Activated CD4-positive, alpha-beta memory T cell treated with anti-CD3 and anti-CD28 coated beads, Interleukin-2, amount 10 ng/mL, durations not matched to agents 7 days and 5 days (primary cell): ENCODE measurements at regions of chr12 and their contacts with region 1.

Region 1: GRCh38 chr12:6620137-6620884 is 13.1 kb upstream of the CHD4 start:
- DNase-seq: peak; percentile 60
- H3K4me3 Mint-ChIP-seq: peak overlapping the region; percentile 54
- H3K27ac Mint-ChIP-seq: no peak overlapping the region
- H3K4me1 Mint-ChIP-seq: peaks cover 16% of the 10 kb centered on the region
- H3K27me3 Mint-ChIP-seq: no peaks in the 10 kb centered on the region

Region 2: DNA sequence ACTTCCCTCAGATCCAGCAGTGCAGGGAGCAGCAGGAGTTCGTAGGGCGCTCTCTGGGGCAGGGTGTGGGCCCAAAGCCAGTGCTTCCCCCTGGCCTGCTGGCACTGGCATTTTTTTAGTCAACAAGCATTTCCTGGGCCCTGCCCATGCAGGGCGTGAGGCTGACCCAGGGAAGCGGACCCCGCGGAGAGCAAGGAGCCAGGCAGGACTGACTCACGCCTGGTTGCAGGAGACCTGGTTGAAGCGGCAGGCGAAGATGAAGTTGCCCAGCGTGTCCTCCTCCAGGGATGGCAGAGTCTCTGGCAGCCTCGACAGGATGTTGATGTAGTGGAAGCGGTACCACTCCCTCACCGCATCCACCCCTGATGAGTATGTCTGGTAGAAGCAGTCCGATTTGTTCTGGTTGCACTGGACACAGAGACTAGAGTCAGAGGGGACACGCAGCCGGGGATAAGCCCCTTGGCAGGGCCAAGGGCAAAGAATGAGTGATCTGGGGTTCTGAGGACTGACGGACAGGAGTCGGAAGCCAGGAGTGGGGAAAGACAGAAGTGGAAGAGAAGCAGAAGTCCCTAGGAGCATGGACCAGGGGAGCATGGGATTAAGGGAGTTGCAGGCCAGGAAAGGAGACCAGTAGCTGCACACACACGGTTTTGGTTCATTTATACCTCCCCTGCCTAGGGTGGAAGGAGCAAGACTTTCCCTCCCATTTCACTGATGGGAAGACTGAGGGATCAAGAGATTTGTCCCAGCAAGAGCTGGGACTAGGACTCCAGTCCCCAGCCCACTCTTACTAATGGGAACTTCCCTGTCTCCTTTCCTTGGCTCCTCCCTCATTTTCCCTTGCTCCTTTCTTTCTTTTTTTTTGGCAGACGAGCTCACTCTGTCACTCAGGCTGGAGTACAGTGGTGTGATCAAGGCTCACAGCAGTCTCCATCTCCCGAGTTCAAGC is 258.2 kb before region 1 on chr12:
- CTCF ChIA-PET with region 1: no interaction called
- POLR2A ChIA-PET with region 1: no interaction called
- DNase-seq: peak; percentile 37
- H3K4me3 Mint-ChIP-seq: peak overlapping the region; percentile 41
- H3K27ac Mint-ChIP-seq: peak overlapping the region; percentile 71
- H3K4me1 Mint-ChIP-seq: peaks cover 24% of the 10 kb centered on the region
- H3K27me3 Mint-ChIP-seq: peaks cover 5% of the 10 kb centered on the region

Region 3: DNA sequence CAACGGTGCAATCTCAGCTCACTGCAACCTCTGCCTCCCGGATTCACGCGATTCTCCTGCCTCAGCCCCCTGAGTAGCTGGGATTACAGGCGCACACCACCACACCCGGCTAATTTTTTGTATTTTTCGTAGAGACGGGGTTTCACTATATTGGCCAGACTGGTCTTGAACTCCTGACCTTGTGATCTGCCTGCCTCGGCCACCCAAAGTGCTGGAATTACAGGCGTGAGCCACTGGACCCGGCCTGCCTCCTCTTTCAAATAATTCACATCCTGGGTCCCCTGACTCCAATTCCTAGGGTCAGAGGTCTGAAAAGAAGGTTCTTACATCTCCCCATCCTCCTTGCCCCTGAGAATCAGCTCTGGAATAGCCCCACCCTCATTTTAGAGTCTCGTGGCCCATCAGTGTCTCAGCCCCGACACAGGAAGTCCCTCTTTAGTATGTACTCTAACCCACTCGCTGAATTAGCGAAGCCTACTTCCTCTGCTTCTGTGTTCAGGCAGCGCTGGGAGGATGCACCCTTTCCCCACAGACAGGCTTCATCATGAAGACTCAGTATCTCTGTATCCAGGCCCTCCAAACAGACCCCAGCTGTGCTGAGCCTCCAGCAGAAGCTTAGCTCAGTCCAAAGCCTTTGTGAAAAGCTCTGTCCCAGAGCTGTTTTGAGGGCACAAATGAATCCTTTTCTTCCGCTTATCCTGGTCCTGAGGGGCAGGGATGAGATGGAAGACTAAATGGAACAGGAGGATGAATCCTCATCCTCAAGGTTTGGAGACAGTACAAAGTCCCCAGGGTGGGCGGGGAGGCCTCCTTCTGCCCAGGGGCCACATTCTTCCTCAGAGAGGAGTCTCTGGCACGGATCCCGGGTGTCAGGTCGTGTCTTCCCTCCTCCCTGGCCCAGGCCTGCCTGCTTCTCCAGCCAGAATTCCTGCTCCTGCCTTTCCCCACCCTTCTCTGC is 12.0 kb after region 1 on chr12:
- CTCF ChIA-PET with region 1: interaction called, 34 read pairs
- POLR2A ChIA-PET with region 1: interaction called, 4 read pairs
- DNase-seq: peak; percentile 64
- H3K4me3 Mint-ChIP-seq: peak overlapping the region; percentile 58
- H3K27ac Mint-ChIP-seq: peak overlapping the region; percentile 91
- H3K4me1 Mint-ChIP-seq: peaks cover 59% of the 10 kb centered on the region
- H3K27me3 Mint-ChIP-seq: no peaks in the 10 kb centered on the region